ENCODE measurements at regions of chr9 and their contacts with region 1.

Region 1: GRCh38 chr9:136978073-136978864 is 965 bp downstream of the PTGDS start:
- DNase-seq: peak in 1 of 2 experiments; percentile 83
- H3K4me3 ChIP-seq: peak overlapping the region; percentile 38; the same call in 1 of the 2 replicates
- H3K27ac ChIP-seq: no peak overlapping the region
- H3K4me1 ChIP-seq: peaks cover 9% of the 10 kb centered on the region
- H3K27me3 ChIP-seq: no peaks in the 10 kb centered on the region
- CTCF ChIP-seq: no peak

Region 2: DNA sequence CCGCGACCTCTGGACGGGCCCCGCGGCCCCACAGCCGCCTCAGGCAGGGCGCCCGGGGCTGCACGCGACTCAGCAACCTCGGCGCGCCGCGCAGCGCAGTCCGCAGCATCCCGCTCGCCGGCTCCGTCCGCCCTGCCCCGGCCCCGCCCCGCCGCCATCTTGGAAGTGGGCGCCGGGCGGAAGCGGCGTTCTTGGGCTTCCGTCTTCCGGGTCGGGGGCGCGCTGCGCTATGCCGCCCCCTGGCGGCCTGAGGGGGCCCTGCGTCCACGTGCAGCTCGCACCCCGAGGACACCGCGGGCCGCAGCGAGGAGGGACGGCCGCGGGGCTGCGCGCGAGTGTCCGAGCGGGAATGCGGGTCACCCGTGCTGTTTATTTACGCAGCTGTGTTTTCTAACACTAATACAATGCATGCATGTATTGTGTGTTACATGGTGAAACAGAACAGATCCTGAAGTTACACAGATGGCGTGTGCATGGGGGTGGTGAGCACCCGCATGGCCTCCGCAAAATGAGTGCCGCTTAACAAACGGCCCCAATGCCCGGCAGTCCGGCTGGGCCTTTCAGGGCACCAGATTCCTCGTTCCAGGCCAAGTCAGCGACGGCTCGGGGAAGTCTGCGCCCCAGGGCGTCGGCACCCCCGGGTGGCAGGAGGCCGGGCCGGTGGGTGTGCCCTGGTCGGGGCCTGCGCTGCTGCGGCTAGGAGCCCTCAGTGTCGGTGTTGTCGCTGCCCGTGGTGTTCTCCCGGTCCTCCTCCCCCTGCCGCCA is 614.5 kb before region 1 on chr9 and contains the start of gene DNLZ:
- CTCF ChIA-PET with region 1: no interaction called
- POLR2A ChIA-PET with region 1: interaction called, 10 read pairs
- intact Hi-C with region 1: no loop called
- DNase-seq: peak; percentile 52 to 89
- H3K4me3 ChIP-seq: peak within 1 kb of the TSS; percentile 77
- H3K27ac ChIP-seq: peak within 1 kb of the TSS; percentile 65
- H3K4me1 ChIP-seq: peaks cover 12% of the 10 kb centered on the region
- H3K27me3 ChIP-seq: no peaks in the 10 kb centered on the region
- CTCF ChIP-seq: peak; percentile 90
- total RNA-seq, gene DNLZ: 9.1 and 19.1 TPM in 2 replicates

Region 3: DNA sequence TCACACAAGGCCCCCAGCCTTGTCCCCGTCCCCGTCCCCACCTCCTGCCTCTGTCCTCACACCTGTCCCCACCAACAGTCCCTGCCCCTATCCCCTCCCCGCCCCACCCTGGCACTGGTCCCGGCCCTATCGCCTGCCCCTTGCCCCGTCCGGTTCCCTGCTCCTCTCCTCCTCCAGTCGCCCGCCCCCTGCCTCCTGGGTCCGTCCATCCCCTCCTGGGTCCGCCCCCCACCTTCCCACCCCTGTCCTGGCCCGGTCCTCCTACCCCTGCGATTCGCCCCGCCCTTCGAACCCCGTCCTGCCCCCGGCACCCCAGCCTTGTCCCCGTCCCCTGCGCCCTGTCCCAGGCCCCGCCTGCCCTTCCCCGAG is 112.5 kb before region 1 on chr9:
- CTCF ChIA-PET with region 1: no interaction called
- POLR2A ChIA-PET with region 1: interaction called, 15 read pairs
- intact Hi-C with region 1: no loop called
- DNase-seq: no peak
- H3K4me3 ChIP-seq: peak overlapping the region; percentile 98
- H3K27ac ChIP-seq: peak overlapping the region; percentile 54; the same call in 1 of the 2 replicates
- H3K4me1 ChIP-seq: peaks cover 16% of the 10 kb centered on the region
- H3K27me3 ChIP-seq: no peaks in the 10 kb centered on the region
- CTCF ChIP-seq: no peak

Region 4: GRCh38 chr9:136991993-136992818 is 13.9 kb after region 1 on chr9 and contains the start of gene PAXX:
- CTCF ChIA-PET with region 1: interaction called, 5 read pairs
- POLR2A ChIA-PET with region 1: interaction called, 21 read pairs
- intact Hi-C with region 1: no loop called
- DNase-seq: peak; percentile 77 to 97
- H3K4me3 ChIP-seq: peak within 1 kb of the TSS; percentile 88
- H3K27ac ChIP-seq: peak within 1 kb of the TSS; percentile 42
- H3K4me1 ChIP-seq: peaks cover 22% of the 10 kb centered on the region
- H3K27me3 ChIP-seq: no peaks in the 10 kb centered on the region
- CTCF ChIP-seq: no peak
- total RNA-seq, gene PAXX: 54.9 and 78.9 TPM in 2 replicates

Region 5: DNA sequence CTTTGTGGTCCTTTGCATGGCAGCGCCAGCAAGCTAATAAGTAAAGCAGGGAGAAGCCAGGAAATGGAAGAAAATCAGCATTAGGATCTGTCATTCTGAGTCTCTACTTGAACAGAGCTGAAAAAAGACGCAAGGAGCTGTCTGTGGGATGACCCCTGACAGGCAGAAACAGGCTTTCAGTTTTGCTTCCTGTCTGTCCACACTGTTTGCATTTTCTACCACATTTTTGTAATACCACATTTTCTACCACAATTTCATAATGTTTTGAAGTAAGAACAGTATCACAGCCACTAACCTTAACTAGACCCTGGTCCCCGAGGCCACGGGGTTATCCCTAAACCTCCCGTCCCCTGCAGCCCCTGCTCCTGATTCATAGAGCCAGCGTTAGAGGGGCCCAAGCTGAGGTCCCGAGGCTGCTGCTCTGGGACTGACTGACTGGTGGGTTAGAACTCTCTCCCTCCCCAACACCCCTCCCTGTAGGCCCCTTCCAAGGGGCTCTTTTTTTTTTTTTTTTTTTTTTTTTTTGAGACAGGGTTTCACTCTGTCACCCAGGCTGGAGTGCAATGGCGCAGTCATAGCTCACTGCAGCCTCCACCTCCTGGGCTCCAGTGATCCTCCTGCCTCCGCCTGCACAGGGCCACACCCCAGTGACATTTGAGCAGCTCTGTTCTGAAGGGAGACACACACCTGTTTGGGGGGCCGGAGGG is 22.1 kb after region 1 on chr9:
- CTCF ChIA-PET with region 1: interaction called, 6 read pairs
- POLR2A ChIA-PET with region 1: interaction called, 13 read pairs
- intact Hi-C with region 1: no loop called
- DNase-seq: no peak
- H3K4me3 ChIP-seq: no peak overlapping the region
- H3K27ac ChIP-seq: no peak overlapping the region
- H3K4me1 ChIP-seq: peaks cover 30% of the 10 kb centered on the region
- H3K27me3 ChIP-seq: no peaks in the 10 kb centered on the region
- CTCF ChIP-seq: no peak

Region 6: GRCh38 chr9:137029058-137029936 is 51.0 kb after region 1 on chr9:
- CTCF ChIA-PET with region 1: interaction called, 14 read pairs
- POLR2A ChIA-PET with region 1: no interaction called
- intact Hi-C with region 1: no loop called
- DNase-seq: peak in 1 of 2 experiments; percentile 86
- H3K4me3 ChIP-seq: no peak overlapping the region; the same call in 1 of the 2 replicates
- H3K27ac ChIP-seq: no peak overlapping the region
- H3K4me1 ChIP-seq: peaks cover 8% of the 10 kb centered on the region; the same call in 1 of the 2 replicates
- H3K27me3 ChIP-seq: no peaks in the 10 kb centered on the region
- CTCF ChIP-seq: peak; percentile 86

Region 7: DNA sequence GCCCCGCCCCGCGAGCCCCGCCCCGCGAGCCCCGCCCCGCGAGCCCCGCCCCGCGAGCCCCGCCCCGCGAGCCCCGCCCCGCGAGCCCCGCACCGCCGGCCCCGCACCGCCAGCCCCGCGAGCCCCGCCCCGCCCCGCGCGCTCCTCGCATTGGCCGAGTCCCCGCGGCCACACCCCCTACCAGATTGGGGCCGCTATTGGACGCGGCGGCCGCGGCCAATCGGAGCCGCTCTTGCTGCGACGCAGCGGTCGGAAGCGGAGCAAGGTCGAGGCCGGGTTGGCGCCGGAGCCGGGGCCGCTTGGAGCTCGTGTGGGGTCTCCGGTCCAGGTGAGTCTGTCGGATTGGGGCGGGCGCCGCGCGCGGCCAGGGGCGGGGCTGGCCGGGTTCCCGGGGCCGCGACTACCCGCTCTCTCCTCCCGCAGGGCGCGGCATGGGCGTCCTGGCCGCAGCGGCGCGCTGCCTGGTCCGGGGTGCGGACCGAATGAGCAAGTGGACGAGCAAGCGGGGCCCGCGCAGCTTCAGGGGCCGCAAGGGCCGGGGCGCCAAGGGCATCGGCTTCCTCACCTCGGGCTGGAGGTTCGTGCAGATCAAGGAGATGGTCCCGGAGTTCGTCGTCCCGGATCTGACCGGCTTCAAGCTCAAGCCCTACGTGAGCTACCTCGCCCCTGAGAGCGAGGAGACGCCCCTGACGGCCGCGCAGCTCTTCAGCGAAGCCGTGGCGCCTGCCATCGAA is 573.5 kb after region 1 on chr9 and contains the start of gene MRPL41:
- CTCF ChIA-PET with region 1: no interaction called
- POLR2A ChIA-PET with region 1: interaction called, 14 read pairs
- intact Hi-C with region 1: no loop called
- DNase-seq: peak; percentile 79 to 96
- H3K4me3 ChIP-seq: peak within 1 kb of the TSS; percentile 82
- H3K27ac ChIP-seq: no peak within 1 kb of the TSS
- H3K4me1 ChIP-seq: peaks cover 8% of the 10 kb centered on the region
- H3K27me3 ChIP-seq: no peaks in the 10 kb centered on the region
- CTCF ChIP-seq: no peak
- total RNA-seq, gene MRPL41: 54.5 and 87.7 TPM in 2 replicates

Region 8: GRCh38 chr9:137753192-137753765 is 775.0 kb after region 1 on chr9:
- CTCF ChIA-PET with region 1: no interaction called
- POLR2A ChIA-PET with region 1: no interaction called
- intact Hi-C with region 1: no loop called
- DNase-seq: no peak
- H3K4me3 ChIP-seq: no peak overlapping the region
- H3K27ac ChIP-seq: no peak overlapping the region
- H3K4me1 ChIP-seq: no peaks in the 10 kb centered on the region
- H3K27me3 ChIP-seq: no peaks in the 10 kb centered on the region
- CTCF ChIP-seq: no peak

Measured in PC-9 (cell line).